Activated CD4-positive, alpha-beta memory T cell treated with anti-CD3 and anti-CD28 coated beads for 36 hours (primary cell): ENCODE measurements at regions of chr19 and their contacts with region 1.

Region 1: GRCh38 chr19:17125715-17126677 is 50.4 kb downstream of the MYO9B start:
- DNase-seq: peak; percentile 82
- H3K4me3 Mint-ChIP-seq: peak overlapping the region; percentile 65
- H3K27ac Mint-ChIP-seq: peak overlapping the region; percentile 92
- H3K4me1 Mint-ChIP-seq: peaks cover 42% of the 10 kb centered on the region
- H3K27me3 Mint-ChIP-seq: no peaks in the 10 kb centered on the region

Region 2: GRCh38 chr19:17183858-17184321 is 57.9 kb after region 1 on chr19:
- CTCF ChIA-PET with region 1: no interaction called
- POLR2A ChIA-PET with region 1: interaction called, 6 read pairs
- intact Hi-C with region 1: loop called (anchors 5 kb)
- DNase-seq: peak; percentile 32
- H3K4me3 Mint-ChIP-seq: peak overlapping the region; percentile 70
- H3K27ac Mint-ChIP-seq: peak overlapping the region; percentile 89
- H3K4me1 Mint-ChIP-seq: peaks cover 19% of the 10 kb centered on the region
- H3K27me3 Mint-ChIP-seq: no peaks in the 10 kb centered on the region

Region 3: DNA sequence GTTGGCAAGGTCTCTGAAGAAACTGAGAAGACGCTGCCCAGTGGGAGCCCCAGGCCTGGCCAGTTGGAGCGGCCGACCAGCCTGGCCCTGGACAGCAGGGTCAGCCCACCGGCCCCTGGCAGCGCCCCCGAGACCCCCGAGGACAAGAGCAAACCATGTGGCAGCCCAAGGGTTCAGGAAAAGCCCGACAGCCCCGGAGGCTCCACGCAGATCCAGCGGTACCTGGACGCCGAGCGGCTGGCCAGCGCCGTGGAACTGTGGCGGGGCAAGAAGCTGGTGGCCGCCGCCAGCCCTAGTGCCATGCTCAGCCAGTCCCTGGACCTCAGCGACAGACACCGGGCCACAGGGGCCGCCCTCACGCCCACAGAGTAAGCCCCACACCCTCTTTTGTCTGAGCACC is 69.1 kb after region 1 on chr19:
- CTCF ChIA-PET with region 1: no interaction called
- POLR2A ChIA-PET with region 1: no interaction called
- intact Hi-C with region 1: no loop called
- DNase-seq: no peak
- H3K4me3 Mint-ChIP-seq: no peak overlapping the region
- H3K27ac Mint-ChIP-seq: no peak overlapping the region
- H3K4me1 Mint-ChIP-seq: no peaks in the 10 kb centered on the region
- H3K27me3 Mint-ChIP-seq: no peaks in the 10 kb centered on the region

Region 4: GRCh38 chr19:17266975-17267788 is 141.2 kb after region 1 on chr19 and contains the start of gene BABAM1:
- CTCF ChIA-PET with region 1: no interaction called
- POLR2A ChIA-PET with region 1: no interaction called
- intact Hi-C with region 1: no loop called
- DNase-seq: peak; percentile 97
- H3K4me3 Mint-ChIP-seq: peak within 1 kb of the TSS; percentile 90
- H3K27ac Mint-ChIP-seq: peak within 1 kb of the TSS; percentile 91
- H3K4me1 Mint-ChIP-seq: peaks cover 21% of the 10 kb centered on the region
- H3K27me3 Mint-ChIP-seq: peaks cover 2% of the 10 kb centered on the region
- total RNA-seq, gene BABAM1: 110 TPM